ENCODE measurements at regions of chr19 and their contacts with region 1.

Region 1: DNA sequence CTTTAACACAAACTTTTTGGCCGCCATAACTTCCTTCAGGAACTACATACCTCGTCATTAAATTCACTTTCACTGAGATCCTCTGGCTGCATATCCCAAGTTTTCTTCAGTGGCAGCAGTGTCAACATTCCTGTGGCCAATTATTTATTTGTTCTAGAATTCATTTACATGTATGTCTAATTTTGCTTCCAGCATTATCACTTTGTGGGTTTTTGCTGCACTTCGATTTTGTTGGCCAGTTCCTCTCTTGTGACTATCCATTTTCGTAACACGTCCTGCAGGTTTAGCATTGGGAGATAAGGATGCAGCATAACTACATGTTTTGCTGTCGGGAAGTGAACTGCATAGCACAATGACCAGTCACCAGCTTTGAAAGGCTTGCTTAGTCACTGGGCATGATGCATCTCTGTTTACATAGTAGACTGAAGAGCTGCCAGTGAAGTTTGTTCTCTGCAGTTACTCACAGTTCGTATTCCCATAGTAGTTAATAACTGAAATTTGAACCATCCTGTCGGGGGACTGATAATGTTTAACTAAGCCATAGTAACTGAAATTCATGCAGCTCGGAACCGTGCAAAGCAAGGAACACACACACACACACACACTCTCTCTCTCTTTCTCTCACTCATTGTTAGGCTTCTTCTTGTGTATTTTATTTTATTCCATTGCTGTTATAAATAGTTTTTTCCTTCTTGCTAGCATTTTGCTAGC is 28.3 kb downstream of the ZNF507 start:
- DNase-seq: peak; percentile 85
- H3K4me3 Mint-ChIP-seq: peak overlapping the region; percentile 60
- H3K27ac Mint-ChIP-seq: peak overlapping the region; percentile 95
- H3K4me1 Mint-ChIP-seq: peaks cover 55% of the 10 kb centered on the region
- H3K27me3 Mint-ChIP-seq: no peaks in the 10 kb centered on the region
- CTCF ChIP-seq: no peak

Region 2: DNA sequence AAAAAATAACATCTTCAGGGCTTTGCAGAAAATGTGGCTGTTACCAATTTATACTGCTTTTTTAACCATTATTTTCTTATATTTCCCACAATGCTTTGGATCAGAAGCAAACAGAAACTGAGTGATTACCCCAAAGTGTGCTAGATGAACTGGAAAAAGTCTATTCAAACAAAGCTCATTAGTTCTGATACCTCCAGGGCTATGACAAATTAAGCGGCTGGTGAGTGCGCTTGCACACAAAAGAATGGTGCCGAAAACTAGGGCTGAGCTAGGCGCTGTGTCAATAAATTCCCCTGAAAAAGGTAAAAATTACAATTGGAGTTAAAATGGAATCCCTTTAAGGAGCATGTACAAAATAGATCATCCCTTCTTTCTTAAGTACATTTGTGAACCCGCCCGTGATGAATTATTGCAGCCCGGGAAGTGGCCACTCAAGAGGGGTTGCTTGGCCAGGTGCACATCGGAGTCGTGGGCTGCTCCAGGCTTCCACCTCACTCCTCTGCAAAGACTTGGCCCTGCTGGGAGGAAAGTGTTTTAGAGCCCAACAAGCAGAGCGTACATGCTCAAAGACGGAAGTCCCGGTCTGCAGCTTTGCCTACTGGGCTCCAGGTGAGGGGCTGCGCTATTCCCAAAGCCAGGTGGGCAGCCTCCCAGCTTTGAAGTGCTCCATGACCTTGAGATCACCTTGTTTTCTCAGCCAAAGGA is 192.4 kb before region 1 on chr19:
- CTCF ChIA-PET with region 1: no interaction called
- intact Hi-C with region 1: no loop called
- DNase-seq: no peak
- H3K4me3 Mint-ChIP-seq: no peak overlapping the region
- H3K27ac Mint-ChIP-seq: no peak overlapping the region
- H3K4me1 Mint-ChIP-seq: no peaks in the 10 kb centered on the region
- H3K27me3 Mint-ChIP-seq: no peaks in the 10 kb centered on the region
- CTCF ChIP-seq: no peak

Region 3: GRCh38 chr19:32233885-32234284 is 139.9 kb before region 1 on chr19:
- CTCF ChIA-PET with region 1: no interaction called
- intact Hi-C with region 1: no loop called
- DNase-seq: no peak
- H3K4me3 Mint-ChIP-seq: no peak overlapping the region
- H3K27ac Mint-ChIP-seq: no peak overlapping the region
- H3K4me1 Mint-ChIP-seq: no peaks in the 10 kb centered on the region
- H3K27me3 Mint-ChIP-seq: peaks cover 23% of the 10 kb centered on the region
- CTCF ChIP-seq: no peak

Region 4: DNA sequence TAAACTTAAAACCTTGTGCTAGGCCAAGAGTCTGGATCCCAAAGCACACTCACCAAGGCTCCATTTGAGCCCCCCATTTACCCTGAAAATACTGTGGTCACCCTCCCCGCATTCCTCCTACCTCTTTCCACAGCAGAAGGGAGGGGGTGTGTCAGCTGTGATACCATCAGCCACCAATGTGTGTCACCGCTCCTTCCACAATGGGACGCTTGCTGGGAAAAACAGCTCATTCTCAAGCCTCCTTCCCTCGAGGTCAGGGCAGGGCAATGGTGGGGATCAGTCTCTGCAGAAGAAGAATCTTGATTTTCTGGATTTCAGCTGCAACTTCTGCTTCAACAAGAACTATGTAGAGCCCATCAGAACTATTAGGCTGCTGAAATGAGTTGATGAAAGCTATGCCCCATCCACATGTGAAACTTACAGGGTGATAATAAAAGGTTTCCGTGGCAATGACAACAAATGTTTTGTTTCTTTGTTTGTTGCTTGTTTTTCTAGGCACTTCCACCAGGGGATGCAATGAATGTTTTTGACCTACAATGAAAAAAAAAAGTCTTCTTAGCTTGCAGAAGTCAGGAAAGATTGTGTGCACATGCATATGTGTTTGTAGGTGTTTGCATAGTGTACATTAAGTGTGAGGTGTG is 54.7 kb before region 1 on chr19:
- CTCF ChIA-PET with region 1: interaction called, 4 read pairs
- intact Hi-C with region 1: loop called (anchors 2 kb)
- DNase-seq: peak; percentile 47
- H3K4me3 Mint-ChIP-seq: no peak overlapping the region
- H3K27ac Mint-ChIP-seq: no peak overlapping the region
- H3K4me1 Mint-ChIP-seq: no peaks in the 10 kb centered on the region
- H3K27me3 Mint-ChIP-seq: peaks cover 41% of the 10 kb centered on the region
- CTCF ChIP-seq: peak; percentile 33

Region 5: GRCh38 chr19:32345261-32346207 is 28.2 kb before region 1 on chr19 and contains the start of gene ZNF507:
- CTCF ChIA-PET with region 1: interaction called, 5 read pairs
- intact Hi-C with region 1: loop called (anchors 1 kb)
- DNase-seq: peak; percentile 93
- H3K4me3 Mint-ChIP-seq: peak within 1 kb of the TSS; percentile 100
- H3K27ac Mint-ChIP-seq: peak within 1 kb of the TSS; percentile 99
- H3K4me1 Mint-ChIP-seq: peaks cover 19% of the 10 kb centered on the region
- H3K27me3 Mint-ChIP-seq: peaks cover 12% of the 10 kb centered on the region
- CTCF ChIP-seq: no peak
- total RNA-seq, gene ZNF507: 31.5 and 34.0 TPM in 2 replicates

Region 6: GRCh38 chr19:32489971-32490370 is 116.2 kb after region 1 on chr19:
- CTCF ChIA-PET with region 1: no interaction called
- intact Hi-C with region 1: no loop called
- DNase-seq: no peak
- H3K4me3 Mint-ChIP-seq: no peak overlapping the region
- H3K27ac Mint-ChIP-seq: no peak overlapping the region
- H3K4me1 Mint-ChIP-seq: no peaks in the 10 kb centered on the region
- H3K27me3 Mint-ChIP-seq: no peaks in the 10 kb centered on the region
- CTCF ChIP-seq: no peak